Colonic mucosa (tissue), 4 donors: ENCODE measurements at regions of chr2 and their contacts with region 1.

Region 1: DNA sequence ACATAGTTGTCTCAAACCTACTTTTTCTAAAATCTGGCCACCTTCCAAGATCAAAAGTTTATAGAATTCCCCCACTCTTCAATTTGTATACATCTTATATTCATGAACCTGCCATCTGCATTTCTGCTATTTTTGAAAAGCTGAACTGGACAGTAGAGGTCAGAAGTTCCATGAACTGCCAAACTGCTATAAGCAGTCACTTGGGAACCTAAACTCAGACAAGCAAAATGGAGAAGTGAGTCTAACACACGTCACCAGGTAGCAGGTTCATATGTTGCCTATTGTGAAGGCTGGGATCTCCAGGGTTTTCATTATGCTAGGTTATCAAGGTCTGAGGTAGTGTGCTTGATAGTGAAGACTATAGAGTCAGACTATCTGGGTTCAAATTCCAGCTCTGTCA is 2.0 kb upstream of the MYO1B start:
- DNase-seq: no peak
- H3K4me3 ChIP-seq: no peak overlapping the region
- H3K27ac ChIP-seq: no peak overlapping the region
- H3K4me1 ChIP-seq: peaks cover 3% of the 10 kb centered on the region
- H3K27me3 ChIP-seq: no peaks in the 10 kb centered on the region
- CTCF ChIP-seq: no peak

Region 2: GRCh38 chr2:190961918-190962487 is 281.2 kb before region 1 on chr2:
- intact Hi-C with region 1: no loop called
- DNase-seq: no peak
- H3K4me3 ChIP-seq: no peak overlapping the region
- H3K27ac ChIP-seq: no peak overlapping the region
- H3K4me1 ChIP-seq: no peaks in the 10 kb centered on the region
- H3K27me3 ChIP-seq: no peaks in the 10 kb centered on the region
- CTCF ChIP-seq: no peak

Region 3: GRCh38 chr2:191501561-191502168 is 258.5 kb after region 1 on chr2:
- intact Hi-C with region 1: loop called (anchors 5 kb)
- DNase-seq: no peak
- H3K4me3 ChIP-seq: no peak overlapping the region
- H3K27ac ChIP-seq: no peak overlapping the region
- H3K4me1 ChIP-seq: no peaks in the 10 kb centered on the region
- H3K27me3 ChIP-seq: no peaks in the 10 kb centered on the region
- CTCF ChIP-seq: peak; percentile 57